Activated B cell treated with CpG ODN at 0.5 μM for 24 hours (primary cell): ENCODE measurements at regions of chr17 and their contacts with region 1.

Region 1: GRCh38 chr17:79074650-79075445 is at the start of gene ENGASE:
- DNase-seq: peak; percentile 90
- ATAC-seq: peak; percentile 97
- H3K4me3 Mint-ChIP-seq: peak within 1 kb of the TSS; percentile 85
- H3K27ac Mint-ChIP-seq: peak within 1 kb of the TSS; percentile 69
- H3K4me1 Mint-ChIP-seq: peaks cover 15% of the 10 kb centered on the region
- H3K27me3 Mint-ChIP-seq: peaks cover 4% of the 10 kb centered on the region
- CTCF ChIP-seq: no peak
- total RNA-seq, gene ENGASE: 55.0 and 60.1 TPM in 2 replicates

Region 2: GRCh38 chr17:79011456-79012147 is 63.2 kb before region 1 on chr17:
- CTCF ChIA-PET with region 1: no interaction called
- POLR2A ChIA-PET with region 1: interaction called, 3 read pairs
- intact Hi-C with region 1: loop called (anchors 1 kb)
- DNase-seq: no peak
- ATAC-seq: no peak
- H3K4me3 Mint-ChIP-seq: no peak overlapping the region
- H3K27ac Mint-ChIP-seq: peak overlapping the region; percentile 19
- H3K4me1 Mint-ChIP-seq: peaks cover 29% of the 10 kb centered on the region
- H3K27me3 Mint-ChIP-seq: peaks cover 8% of the 10 kb centered on the region
- CTCF ChIP-seq: no peak